ENCODE measurements at regions of chr10 and their contacts with region 1.

Region 1: GRCh38 chr10:102776779-102777456 is 33.2 kb downstream of the WBP1L start:
- DNase-seq: peak; percentile 88

Region 2: DNA sequence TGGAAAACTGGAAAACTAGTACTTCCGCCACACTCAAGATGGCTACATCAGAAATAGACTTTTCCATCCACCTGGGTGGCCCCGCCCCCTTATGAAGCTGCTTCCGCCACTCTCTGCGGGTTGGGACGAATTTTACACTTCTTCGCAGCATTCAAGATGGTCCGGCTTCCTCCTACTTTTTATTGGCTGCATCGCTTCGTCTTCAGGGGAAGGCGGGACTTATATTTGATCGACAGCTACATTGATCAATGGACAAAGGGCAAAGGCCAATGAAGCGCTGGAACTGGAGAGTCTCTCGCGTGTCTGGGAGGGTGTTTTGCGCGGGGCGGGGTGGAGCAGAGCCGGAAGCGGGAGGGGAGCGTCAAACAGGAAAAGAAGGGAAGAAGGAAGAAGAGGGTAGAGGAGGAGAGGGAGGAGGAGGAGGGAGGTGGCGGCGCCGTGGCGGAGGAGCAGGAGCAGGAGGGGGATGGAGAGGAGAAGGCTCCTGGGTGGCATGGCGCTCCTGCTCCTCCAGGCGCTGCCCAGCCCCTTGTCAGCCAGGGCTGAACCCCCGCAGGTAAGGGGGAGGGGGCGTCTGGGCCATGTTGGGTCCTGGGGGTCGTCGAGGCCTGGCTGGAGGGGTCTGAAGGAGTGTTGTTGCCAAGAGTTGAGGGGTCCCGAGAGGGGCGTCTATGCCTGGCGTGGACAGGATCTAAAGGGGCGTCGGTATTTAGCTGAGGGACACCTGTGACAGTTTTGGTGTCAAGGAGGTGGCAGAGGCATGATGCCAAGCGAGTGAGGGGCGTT is 33.1 kb before region 1 on chr10 and contains the start of gene WBP1L:
- intact Hi-C with region 1: loop called (anchors 2 kb)
- DNase-seq: peak; percentile 98
- total RNA-seq, gene WBP1L: 19.2 TPM

Region 3: GRCh38 chr10:102796407-102797176 is 19.7 kb after region 1 on chr10:
- intact Hi-C with region 1: loop called (anchors 2 kb)
- DNase-seq: peak; percentile 96

Region 4: DNA sequence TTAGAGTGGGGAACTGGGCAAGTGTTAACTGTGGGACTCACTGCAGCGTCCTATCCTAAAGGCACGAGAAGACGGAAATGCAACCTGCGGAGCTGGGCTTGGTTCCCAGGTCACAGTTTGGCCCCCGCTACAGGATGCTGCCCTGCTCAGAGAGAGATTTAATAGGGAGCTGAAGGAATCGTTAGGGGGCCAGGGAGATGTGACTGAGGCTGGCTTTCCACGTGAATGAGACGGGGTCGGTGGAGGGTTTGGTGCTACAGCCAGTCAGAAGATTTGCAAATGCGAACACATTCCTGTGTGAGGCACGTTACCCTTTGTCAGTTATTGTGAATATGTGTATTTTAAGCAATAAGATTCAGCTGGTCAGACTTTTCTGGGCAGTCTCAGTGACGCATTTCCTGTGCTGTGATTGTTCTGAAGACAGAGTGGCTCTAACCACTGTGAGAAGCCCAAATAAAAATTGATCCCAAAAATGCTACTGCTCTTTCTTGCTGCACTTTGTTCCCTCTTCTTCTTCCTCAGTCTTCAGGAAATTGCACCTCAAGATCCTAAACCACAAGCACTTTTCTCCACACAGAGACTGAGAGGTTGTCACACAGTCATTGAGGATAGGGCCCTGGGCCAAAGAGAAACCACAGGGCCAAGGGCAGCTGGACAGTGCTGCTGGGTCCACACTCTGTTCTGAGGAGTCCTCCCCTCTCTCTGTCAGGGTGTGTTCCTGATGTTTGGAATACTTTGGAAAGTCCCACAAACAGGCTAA is 39.1 kb after region 1 on chr10:
- intact Hi-C with region 1: loop called (anchors 2 kb)
- DNase-seq: peak; percentile 83